ENCODE measurements at regions of chr2 and their contacts with region 1.

Region 1: DNA sequence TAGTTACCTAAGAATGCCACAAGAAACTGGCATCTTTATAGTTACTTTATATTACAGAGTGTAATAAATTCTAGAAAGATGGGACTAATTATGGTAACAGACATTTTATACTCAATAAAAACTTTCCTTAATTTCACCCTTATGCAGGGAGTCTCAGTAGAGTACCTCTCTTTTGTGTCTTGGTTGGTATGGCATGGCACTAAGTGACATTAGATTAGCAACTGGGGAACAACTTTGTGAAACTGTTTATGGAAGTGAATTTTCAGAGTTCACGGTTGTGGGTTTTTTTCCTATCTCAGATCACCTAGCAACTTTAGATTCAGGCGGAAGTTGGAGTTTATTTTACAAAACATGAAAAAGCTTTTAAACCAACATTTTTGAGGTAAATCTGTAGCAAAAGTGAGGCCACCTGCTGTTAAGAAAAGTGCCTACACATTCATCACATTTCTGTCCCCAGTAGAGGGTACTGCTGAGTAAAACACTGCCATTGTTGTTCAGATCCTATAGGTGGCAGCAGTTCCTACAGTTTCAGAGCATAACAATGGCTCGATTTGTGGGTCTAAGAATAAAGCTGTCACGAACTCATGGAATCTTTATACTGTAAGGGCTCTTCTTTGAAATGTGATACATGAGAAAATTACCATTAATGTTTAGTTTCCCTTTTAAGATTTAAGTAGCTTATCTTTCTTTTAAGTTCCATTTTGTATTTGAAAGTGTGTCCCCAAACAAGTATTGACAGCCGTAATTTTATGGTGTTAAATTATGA is 117.6 kb downstream of the CAMKMT start:
- DNase-seq: peak in 2 of 5 donors; percentile 19 to 34
- ATAC-seq: peak; percentile 64 to 98 (median 90)
- H3K4me3 ChIP-seq: no peak overlapping the region
- H3K27ac ChIP-seq: no peak overlapping the region
- H3K4me1 ChIP-seq: no peaks in the 10 kb centered on the region
- H3K27me3 ChIP-seq: no peaks in the 10 kb centered on the region
- CTCF ChIP-seq: peak; percentile 94 to 100 (median 98)
- POLR2A ChIP-seq: no peak

Region 2: DNA sequence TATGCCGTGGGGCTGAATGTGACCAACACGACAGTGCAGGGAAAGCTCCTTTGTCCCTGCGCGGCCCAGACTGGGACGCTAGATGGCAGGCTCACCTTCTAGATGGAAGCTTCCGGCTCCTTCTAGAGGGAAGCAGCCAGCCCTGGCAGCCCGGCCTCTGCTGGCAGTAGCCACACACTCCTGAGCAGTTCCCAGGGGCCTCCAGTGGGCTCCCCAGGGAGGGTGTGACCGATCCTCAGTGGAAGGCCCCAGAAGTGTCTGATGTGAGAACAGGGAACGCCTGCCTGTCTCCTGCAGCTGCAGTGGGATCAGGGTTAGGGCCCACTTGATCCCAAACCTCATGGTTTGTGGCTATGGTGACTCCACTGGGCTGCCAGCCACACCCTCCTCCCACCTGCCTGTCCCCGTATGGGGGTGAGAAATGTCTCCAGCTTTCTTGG is 435.0 kb before region 1 on chr2:
- intact Hi-C with region 1: loop called in 6 of 10 experiments (anchors 2 to 10 kb)
- DNase-seq: peak; percentile 73 to 90 (median 82)
- ATAC-seq: peak; percentile 77 to 99 (median 94)
- H3K4me3 ChIP-seq: no peak overlapping the region
- H3K27ac ChIP-seq: no peak overlapping the region
- H3K4me1 ChIP-seq: peaks cover 0 to 7% (median 2%) of the 10 kb centered on the region in 12 donors
- H3K27me3 ChIP-seq: no peaks in the 10 kb centered on the region
- CTCF ChIP-seq: peak; percentile 60 to 93 (median 83)
- POLR2A ChIP-seq: no peak

Region 3: DNA sequence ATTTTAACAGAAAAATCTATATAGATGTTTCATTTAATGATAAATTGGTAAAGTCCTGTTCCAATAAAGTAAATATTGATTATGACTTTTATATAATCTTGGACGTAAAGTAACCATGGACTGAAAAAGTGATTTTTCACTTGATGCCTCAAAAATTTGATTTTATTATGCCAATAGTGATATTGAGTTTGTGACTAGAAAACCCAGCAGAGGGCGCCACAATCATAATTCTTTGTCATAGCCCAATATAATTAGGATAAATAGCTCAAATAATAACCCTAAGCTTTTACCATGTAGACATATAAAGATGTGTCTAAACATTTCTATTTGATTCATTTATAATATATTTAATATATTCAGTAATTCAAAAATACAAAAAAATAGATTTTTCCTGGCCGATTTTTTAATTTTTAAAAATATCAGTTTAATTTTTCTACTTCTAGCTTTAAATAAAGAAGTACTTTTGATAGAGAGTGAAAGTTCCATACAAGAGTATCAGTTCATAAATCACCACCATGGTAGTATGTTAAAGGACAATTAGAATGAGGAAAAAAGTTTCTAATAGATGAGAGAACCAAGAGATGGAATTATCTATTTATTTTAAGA is 86.9 kb before region 1 on chr2:
- intact Hi-C with region 1: loop called in 7 of 10 experiments (anchors 5 to 10 kb)
- DNase-seq: peak in 3 of 5 donors; percentile 16 to 40 (median 36)
- ATAC-seq: no peak
- H3K4me3 ChIP-seq: no peak overlapping the region
- H3K27ac ChIP-seq: no peak overlapping the region
- H3K4me1 ChIP-seq: no peaks in the 10 kb centered on the region
- H3K27me3 ChIP-seq: no peaks in the 10 kb centered on the region
- CTCF ChIP-seq: peak in 11 of 12 donors; percentile 43 to 75 (median 58)
- POLR2A ChIP-seq: no peak

Region 4: GRCh38 chr2:44397447-44398175 is 81.7 kb before region 1 on chr2:
- intact Hi-C with region 1: loop called in 7 of 10 experiments (anchors 5 to 10 kb)
- DNase-seq: no peak
- ATAC-seq: no peak
- H3K4me3 ChIP-seq: peak overlapping the region in 1 of 12 donors; percentile 1
- H3K27ac ChIP-seq: no peak overlapping the region
- H3K4me1 ChIP-seq: no peaks in the 10 kb centered on the region
- H3K27me3 ChIP-seq: no peaks in the 10 kb centered on the region
- CTCF ChIP-seq: no peak
- POLR2A ChIP-seq: no peak

Region 5: DNA sequence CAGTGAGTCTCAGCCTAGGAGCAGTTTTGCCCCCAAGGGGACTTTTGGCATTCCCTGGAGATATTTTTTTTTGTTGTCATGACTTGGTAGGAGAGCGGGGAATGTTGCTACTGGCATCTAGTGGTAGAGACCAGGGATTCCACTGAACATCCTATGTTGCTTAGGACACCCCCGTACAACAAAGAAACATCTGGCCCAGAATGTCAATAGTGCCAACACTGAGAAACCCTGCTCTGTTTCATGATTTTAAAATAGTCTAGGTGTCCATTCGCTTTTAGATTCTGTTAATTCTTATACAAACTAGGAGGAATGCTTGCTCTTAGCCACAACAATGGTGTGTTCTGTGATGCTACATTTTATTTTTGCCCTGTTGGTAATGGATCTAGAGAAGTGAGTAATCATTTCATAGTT is 236.4 kb after region 1 on chr2:
- intact Hi-C with region 1: loop called in 8 of 10 experiments (anchors 2 to 10 kb)
- DNase-seq: peak in 1 of 5 donors; percentile 6
- ATAC-seq: peak in 3 of 4 donors; percentile 61 to 79 (median 69)
- H3K4me3 ChIP-seq: no peak overlapping the region
- H3K27ac ChIP-seq: no peak overlapping the region
- H3K4me1 ChIP-seq: peaks cover 0 to 9% (median 0%) of the 10 kb centered on the region in 12 donors
- H3K27me3 ChIP-seq: no peaks in the 10 kb centered on the region
- CTCF ChIP-seq: peak; percentile 17 to 59 (median 40)
- POLR2A ChIP-seq: no peak

Region 6: DNA sequence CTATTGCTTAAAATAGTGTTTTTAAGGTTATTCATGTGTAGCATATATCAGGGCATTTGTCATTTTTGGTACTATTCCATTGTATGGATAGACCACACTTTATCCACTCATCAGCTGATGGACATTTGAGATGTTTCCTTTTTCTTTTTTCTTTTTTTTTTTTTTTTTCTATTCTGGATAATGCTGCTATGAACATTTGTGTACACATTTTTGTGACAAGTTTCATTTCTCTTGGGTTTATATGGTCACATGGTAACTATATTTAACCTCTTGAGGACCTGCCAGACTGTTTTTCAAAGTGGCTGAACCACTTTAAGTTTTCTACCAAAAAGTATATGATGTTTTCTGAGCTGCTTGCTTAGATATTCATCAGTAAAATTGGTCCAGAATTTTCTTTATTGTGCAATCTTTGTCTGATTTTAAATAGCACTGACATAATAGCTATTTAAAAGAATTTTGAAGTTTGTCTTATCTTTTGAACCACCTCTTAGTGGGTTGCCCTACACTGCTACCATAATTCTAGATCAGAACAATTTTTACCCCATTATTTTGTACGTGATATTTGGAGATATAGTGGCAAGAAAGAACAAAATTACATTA is 242.8 kb after region 1 on chr2:
- intact Hi-C with region 1: loop called in 6 of 10 experiments (anchors 5 to 10 kb)
- DNase-seq: no peak
- ATAC-seq: no peak
- H3K4me3 ChIP-seq: no peak overlapping the region
- H3K27ac ChIP-seq: no peak overlapping the region
- H3K4me1 ChIP-seq: no peaks in the 10 kb centered on the region
- H3K27me3 ChIP-seq: no peaks in the 10 kb centered on the region
- CTCF ChIP-seq: no peak
- POLR2A ChIP-seq: no peak

Region 7: DNA sequence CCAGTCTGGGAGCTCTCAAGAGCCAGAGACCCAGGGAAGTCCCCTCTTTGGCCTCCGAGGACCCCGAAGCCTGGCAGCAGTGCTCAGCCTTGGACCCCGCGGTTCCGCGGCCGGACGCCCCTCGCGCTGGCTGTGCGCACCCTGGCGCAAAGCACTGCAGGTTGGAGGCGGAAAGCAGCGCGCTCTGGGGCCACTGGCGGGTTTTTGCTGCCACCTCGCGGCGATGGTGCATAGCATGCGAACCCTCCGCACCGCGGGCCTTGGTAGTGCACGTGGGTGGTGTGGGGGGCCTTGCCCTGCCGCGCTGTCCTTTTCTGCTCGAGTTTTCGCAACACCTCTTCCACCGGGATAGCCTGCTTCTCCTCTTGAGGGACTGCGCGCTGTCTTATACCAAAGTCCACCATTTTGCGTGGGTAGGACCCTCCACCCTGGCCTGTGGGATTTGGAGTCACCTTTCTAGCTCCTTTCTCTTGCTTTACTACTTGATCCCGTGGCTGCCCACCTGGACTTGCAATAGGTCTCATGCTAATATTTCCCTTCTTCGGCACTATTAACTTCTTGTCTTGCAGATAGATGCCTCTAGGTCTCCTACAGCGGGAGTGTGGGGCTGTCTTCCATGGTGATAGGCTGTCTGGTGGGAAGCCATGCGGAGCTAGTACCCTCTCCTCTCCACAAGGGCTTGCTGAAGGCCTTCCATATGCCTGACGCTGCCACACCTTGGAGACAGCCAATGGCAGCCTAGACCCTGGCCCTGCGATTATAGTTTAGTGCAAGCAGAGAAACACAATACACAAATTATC is 476.5 kb after region 1 on chr2:
- intact Hi-C with region 1: loop called (anchors 1 to 5 kb)
- DNase-seq: peak; percentile 63 to 88 (median 72)
- ATAC-seq: peak; percentile 74 to 88 (median 82)
- H3K4me3 ChIP-seq: peak overlapping the region; percentile 0 to 47 (median 31)
- H3K27ac ChIP-seq: no peak overlapping the region
- H3K4me1 ChIP-seq: peaks cover 0 to 35% (median 28%) of the 10 kb centered on the region in 12 donors
- H3K27me3 ChIP-seq: peaks cover 27 to 86% (median 59%) of the 10 kb centered on the region in 9 donors
- CTCF ChIP-seq: peak; percentile 76 to 94 (median 88)
- POLR2A ChIP-seq: no peak

Measured in heart left ventricle (tissue), 16 donors.